OCI-LY7 (cell line): ENCODE measurements at regions of chr15 and their contacts with region 1.

Region 1: DNA sequence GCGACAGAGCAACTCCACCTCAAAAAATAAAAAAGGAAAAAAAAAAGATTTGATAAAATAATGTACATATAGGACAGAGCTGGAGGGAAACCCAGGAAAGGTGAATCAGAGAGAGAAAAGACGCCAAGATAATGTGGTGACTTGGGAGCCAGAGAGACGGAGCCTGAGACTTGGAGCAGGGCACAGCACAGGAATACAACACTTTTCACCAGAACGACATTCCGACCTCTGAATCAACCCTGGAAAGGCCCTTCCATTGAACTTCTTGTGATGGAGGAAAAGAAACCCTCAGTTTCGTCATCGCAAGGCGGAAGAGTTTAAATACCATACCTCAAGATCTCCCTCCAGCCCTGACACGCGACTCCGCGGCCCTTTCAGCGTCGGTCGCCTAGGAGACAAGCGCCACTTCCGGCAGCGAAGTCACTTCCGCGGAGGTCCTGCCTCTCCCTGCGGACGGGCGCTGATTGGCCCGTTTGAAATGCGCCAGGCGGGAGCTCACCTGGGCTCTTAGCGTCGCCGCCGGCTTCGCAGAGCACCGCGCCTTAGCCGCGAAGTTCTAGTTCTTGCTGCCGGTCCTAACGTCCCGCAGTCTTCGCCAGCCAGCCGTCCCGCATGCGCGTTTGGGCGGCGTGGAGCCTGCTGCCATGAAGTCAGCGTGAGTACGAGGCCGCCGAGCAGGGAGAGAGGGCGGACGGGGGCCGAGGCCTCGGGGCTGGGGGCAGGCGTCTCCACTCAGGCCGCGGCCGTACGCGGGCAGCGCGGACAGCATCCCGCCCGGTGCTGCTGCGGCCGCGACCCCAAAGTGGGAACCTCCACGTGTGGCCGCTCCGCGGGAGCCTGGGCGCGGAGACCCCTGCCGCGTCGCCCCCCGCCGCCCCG is at the start of gene KIF23:
- DNase-seq: peak; percentile 95
- H3K4me3 ChIP-seq: peak within 1 kb of the TSS; percentile 99
- H3K27ac ChIP-seq: peak within 1 kb of the TSS; percentile 64
- H3K4me1 ChIP-seq: peaks cover 12% of the 10 kb centered on the region
- CTCF ChIP-seq: no peak
- total RNA-seq, gene KIF23: 54.0 and 66.1 TPM in 2 replicates

Region 2: DNA sequence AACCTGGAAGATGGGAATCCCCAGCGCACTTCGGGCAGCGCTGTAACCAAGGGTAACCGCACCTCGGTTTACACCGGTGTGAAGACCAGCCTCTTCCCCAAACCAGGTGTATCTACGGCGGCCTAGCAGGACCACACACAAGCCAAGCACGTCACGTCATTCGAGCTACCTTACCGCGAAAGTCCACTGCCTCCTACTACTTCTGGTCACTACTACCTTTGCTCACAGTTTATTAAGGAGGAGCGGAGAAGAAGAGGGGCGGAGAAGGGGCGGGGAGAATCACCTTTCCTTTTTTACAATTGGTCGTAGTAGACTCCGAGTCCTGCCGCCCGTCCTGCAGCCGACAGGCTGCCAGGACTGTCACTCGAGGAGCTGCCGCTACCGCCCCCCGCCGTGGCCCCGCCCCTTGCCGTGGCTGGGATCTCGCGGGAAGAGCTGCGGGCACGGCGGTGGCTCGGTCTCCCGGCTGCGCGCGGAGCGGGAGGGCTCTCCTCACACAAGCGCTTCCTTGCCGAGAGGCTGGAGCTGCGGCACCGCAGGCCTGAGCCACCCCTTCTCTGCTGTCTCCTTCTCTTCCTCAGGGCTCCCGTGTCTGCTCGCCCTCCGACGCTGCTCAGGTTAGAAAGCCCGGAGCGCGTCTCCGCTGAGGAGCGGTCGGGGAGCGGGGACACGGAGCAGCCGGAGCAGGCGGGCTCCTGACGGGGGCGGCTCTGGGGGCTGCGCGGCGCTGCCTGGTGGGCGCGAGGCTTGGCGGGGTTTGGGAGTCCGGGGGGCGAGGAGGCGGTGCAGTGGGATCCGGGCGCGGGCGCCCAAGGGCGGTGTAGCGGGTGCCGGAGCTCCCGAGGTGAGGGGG is 253.7 kb before region 1 on chr15 and contains the start of gene GLCE:
- CTCF ChIA-PET with region 1: no interaction called
- POLR2A ChIA-PET with region 1: no interaction called
- intact Hi-C with region 1: loop called (anchors 5 kb)
- DNase-seq: peak; percentile 95
- H3K4me3 ChIP-seq: peak within 1 kb of the TSS; percentile 81
- H3K27ac ChIP-seq: no peak within 1 kb of the TSS
- H3K4me1 ChIP-seq: peaks cover 10% of the 10 kb centered on the region
- CTCF ChIP-seq: no peak
- total RNA-seq, gene GLCE: 7.1 and 7.3 TPM in 2 replicates

Region 3: DNA sequence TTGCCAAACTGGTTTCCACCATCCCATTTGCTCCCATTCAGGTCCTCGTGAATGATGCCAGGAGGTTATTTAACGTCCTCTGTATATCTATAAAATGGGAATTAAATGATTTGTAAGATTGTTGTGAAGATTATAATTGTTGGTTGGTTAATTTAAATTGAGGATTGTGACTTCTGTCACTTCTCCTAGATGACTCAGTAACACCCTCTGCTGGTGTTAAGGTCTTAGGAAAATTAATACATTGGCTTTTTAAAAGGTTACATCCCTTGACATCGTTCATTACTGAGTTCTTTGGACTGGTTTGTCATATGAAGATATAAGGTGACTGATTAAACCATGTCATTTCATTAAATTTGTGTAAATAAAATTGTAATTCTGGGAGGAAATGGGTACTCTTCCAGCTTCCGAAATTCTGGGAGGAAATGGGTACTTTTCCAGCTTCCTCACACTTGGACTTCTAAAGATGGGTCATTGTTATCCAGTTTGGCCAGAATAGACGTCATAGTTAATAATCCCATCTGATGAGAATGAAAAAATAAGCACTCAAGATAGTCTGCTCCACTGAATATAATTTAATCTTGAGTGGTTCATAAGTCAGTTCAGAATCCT is 148.6 kb before region 1 on chr15:
- CTCF ChIA-PET with region 1: no interaction called
- POLR2A ChIA-PET with region 1: no interaction called
- intact Hi-C with region 1: no loop called
- DNase-seq: peak; percentile 47
- H3K4me3 ChIP-seq: no peak overlapping the region
- H3K27ac ChIP-seq: no peak overlapping the region
- H3K4me1 ChIP-seq: no peaks in the 10 kb centered on the region
- CTCF ChIP-seq: peak; percentile 85

Region 4: DNA sequence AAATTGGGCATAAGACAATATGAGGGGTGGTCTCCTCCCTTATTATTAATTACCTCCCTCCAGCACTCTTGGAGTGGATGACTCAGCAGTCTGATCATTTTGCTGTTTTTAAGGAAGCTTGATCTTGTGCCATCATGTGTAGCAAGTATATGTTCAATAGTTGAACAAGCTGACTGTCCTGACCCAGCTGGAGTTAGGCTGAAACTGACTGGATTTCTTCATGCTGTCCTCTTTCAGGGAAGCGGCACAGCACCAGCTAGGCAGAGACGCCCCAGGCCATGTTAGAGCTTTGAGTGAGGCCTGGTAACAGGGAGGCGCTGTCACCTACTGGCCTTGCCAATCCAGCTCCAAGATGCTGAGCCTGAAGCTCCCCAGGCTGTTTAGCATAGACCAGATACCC is 54.3 kb before region 1 on chr15:
- CTCF ChIA-PET with region 1: no interaction called
- POLR2A ChIA-PET with region 1: no interaction called
- intact Hi-C with region 1: no loop called
- DNase-seq: no peak
- H3K4me3 ChIP-seq: no peak overlapping the region
- H3K27ac ChIP-seq: no peak overlapping the region
- H3K4me1 ChIP-seq: no peaks in the 10 kb centered on the region
- CTCF ChIP-seq: no peak

Region 5: DNA sequence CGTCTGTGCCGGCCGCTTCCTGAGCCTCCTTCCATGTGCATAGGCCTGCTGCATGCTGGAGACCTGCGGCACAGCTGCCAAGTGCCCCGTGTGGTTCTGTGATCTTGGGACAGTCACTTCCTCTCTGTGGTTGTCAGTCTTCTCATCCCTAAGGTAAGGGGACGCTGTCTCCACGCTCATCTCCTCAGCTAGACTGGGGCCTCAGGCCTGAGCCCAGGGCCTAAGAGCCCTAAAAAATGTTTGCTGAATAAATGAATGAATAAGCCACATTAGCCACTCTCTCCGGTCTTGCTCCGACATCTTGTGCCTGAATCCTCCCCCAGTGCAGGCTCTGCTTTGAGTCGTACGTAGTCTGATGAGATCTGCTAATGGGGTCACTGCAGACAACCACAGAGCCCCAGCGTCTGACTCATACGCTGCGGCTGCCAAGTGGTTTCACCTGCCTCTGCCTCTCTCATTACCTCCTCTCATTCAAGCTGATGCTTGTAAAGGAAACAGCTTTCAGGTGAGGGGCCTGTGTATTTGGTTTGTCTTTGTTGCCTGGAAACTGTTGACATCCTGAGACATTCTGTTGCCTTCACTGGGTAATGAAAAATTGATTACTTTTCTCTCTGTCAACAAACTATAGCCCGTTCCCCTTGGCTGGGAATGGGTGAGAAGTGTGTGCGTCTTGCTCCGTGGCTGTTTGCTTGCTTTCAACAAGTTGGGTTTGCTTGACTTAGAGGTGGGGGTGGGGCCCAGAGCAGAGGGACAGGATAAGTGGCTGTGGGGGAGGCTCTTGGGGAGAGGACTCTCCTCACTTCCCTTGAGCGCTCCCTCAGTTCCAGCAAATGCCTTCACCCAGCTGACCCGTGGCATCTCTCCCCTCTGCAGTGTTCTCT is 54.4 kb after region 1 on chr15:
- CTCF ChIA-PET with region 1: no interaction called
- POLR2A ChIA-PET with region 1: no interaction called
- intact Hi-C with region 1: no loop called
- DNase-seq: no peak
- H3K4me3 ChIP-seq: no peak overlapping the region
- H3K27ac ChIP-seq: no peak overlapping the region
- H3K4me1 ChIP-seq: no peaks in the 10 kb centered on the region
- CTCF ChIP-seq: no peak

Region 6: DNA sequence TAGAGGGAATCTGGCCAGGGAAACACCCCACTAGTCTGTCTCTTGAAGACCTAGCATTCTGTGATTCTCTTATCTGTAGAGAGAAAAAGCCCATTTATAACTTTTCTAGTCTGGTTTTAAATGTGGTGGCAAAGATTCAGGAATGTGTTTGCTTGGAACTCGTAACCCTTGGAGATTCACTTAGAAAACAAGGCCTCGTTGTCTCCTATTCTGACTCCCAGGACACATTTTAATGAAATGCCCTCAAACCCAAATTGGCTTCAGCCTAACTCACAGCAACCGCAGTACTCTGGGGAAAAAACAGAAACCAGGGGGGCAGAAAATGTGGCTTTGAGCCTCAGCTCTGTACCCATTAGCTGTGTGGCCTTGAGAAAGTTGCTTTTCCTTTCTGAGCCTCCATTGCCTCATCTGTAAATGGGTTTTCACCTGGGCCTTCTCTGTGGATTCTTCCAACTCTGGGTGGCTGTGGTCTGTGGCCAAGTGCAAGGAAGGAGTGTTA is 75.1 kb after region 1 on chr15:
- CTCF ChIA-PET with region 1: no interaction called
- POLR2A ChIA-PET with region 1: no interaction called
- intact Hi-C with region 1: no loop called
- DNase-seq: no peak
- H3K4me3 ChIP-seq: no peak overlapping the region
- H3K27ac ChIP-seq: no peak overlapping the region
- H3K4me1 ChIP-seq: no peaks in the 10 kb centered on the region
- CTCF ChIP-seq: no peak